Dorsolateral prefrontal cortex (tissue), 120 donors: ENCODE measurements at regions of chr11 and their contacts with region 1.

Region 1: DNA sequence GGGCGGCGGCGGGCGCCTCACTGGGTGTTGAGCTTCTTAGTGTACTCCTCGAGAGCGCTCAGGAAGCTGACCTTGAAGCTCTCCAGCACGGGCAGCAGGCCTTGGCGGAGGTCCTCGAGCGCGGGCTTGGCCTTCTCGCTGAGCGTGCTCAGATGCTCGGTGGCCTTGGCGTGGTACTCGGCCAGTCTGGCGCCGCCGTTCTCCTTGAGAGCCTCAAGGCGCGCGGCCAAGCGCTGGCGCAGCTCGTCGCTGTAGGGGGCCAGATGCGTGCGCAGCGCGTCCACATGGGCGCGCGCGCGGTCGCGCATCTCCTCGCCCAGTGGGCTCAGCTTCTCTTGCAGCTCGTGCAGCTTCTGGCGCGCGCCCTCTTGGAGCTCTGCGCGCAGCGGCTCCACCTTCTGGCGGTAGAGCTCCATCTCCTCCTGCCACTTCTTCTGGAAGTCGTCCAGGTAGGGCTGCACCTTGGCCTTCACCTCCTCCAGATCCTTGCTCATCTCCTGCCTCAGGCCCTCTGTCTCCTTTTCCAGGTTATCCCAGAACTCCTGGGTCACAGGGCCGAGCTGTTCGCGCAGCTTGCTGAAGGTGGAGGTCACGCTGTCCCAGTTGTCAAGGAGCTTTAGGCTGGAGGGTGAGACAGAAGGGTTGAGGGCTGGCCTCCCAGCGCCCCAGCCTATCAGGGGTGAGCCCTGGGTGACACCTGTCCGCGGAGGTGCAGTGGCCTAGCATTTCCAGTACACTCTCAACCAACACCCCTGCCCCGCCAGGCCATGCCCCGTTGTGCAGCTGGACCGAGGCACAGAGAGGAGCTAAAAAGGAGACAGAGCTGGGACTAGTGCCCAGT is 1.4 kb downstream of the APOA1 start:
- DNase-seq: peak; percentile 66 to 90 (median 84)
- H3K4me3 ChIP-seq: peak overlapping the region; percentile 19 to 67 (median 53)
- H3K27ac ChIP-seq: peak overlapping the region in 56 of 59 donors; percentile 3 to 90 (median 74)
- H3K27me3 ChIP-seq: no peaks in the 10 kb centered on the region
- CTCF ChIP-seq: peak; percentile 26 to 81 (median 70)

Region 2: DNA sequence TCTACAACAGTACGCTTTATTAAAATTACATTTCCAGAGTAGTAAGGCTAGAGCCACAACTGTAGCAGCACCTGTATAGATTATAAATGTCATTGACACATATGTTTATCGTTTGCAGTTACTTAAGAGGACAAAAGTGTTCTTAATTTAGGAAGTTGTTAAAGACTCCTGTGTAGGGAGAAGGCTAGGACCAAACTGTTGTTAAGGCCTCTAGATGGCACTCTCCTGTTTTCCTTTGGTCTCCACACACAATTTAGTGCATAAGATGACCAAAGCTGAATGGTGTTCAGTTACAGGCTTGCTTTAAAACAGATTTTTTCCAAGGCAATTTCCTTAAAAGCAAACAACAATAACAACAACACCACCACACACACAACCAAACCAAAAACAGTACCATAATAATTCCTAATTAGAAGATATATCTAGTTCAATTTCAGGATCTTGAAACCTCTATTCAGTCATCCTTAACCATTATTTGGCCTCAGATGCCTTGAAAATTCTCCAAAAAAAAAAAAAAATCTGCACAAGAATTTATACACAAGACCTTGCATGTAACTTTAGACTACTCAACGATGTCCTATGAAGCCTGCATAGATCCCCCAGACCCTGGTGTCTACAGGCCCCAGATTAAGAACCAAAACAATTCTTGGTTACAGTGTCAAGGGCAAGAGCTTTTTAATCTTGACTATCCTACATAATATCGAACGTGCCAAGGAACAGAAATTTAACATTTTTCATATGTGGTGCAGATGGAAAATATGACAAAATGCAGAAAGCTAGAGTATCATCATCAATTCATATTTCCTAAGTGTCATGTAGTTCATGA is 44.0 kb after region 1 on chr11:
- intact Hi-C with region 1: loop called in 1 of 2 experiments (anchors 5 kb)
- DNase-seq: no peak
- H3K4me3 ChIP-seq: no peak overlapping the region
- H3K27ac ChIP-seq: peak overlapping the region in 52 of 59 donors; percentile 3 to 88 (median 67)
- H3K27me3 ChIP-seq: no peaks in the 10 kb centered on the region
- CTCF ChIP-seq: peak in 55 of 56 donors; percentile 39 to 88 (median 74)